Activated naive CD4-positive, alpha-beta T cell treated with anti-CD3 and anti-CD28 coated beads for 36 hours (primary cell): ENCODE measurements at regions of chr7 and their contacts with region 1.

Region 1: DNA sequence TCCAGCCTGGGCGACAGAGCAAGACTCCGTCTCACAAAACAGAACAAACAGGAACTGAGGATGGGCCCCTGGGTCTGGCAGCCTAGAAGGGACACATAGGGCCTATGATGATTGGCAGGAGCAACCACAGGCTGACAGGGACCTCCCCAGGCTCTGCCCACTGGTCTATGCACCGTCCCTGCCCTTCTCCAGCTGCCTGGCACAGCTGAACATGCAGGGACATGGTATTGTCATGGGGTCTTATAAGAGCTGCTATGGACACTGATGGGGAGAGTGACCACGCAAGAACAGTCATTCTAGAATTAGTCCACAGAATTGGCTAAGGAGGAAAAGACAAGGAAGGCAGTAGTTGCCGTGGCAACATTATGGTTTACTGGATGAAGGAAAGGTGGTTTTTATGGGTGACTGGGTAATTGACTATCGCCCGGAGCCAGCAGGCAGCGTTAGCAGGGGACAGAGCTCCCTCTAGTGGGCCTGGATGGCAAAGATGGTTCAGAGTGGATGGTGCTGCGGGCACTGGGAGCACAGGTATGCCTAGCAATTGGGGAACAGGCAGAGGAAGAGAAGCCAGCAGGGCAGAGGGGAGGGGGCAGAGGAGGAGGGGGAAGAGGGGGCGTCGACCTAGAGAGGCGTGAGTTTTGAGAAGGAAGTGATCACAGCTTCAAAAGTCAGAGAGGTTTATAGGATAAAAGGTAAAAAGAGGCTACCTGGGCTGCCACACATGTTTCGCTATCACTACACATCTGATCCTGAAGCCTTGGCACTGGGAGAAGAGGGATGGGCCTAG is 7.8 kb upstream of the TRIM56 start:
- DNase-seq: peak; percentile 94
- H3K4me3 Mint-ChIP-seq: no peak overlapping the region
- H3K27ac Mint-ChIP-seq: no peak overlapping the region
- H3K4me1 Mint-ChIP-seq: peaks cover 7% of the 10 kb centered on the region
- H3K27me3 Mint-ChIP-seq: no peaks in the 10 kb centered on the region

Region 2: DNA sequence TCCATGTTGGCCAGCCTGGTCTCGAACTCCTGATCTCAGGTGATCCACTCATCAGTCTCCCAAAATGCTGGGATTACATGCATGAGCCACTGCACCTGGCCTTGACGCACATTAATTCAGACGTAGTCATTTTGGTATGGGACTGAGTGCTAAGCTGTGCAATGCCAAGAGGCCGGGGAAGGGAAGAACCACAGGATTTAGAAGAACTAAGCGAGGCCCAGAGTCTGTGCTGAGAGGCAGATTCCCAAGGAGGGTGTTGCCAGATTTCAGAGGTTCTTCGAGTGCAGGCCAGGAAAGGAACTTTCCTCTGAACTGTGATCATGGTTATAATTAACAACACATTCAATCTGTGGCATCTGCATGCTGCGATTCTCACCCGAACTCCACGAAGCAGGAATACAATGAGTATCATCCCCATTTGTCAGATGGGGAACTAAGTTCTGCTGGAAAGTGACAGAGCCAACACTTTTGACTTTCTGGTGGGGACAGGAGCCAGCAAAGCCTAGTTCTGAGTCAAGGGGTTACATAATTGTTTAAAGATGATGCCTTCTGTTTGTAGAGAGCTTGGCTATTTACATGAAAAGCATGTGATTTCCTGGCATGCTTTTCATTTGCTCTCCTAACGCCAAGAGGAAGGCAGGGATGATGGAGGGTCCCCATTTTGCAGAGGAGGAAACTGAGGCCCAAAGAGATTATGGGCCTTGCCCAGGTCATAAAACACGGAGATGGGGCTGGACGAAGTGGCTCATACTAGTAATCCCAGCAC is 350.3 kb before region 1 on chr7:
- CTCF ChIA-PET with region 1: no interaction called
- intact Hi-C with region 1: no loop called
- DNase-seq: no peak
- H3K4me3 Mint-ChIP-seq: no peak overlapping the region
- H3K27ac Mint-ChIP-seq: no peak overlapping the region
- H3K4me1 Mint-ChIP-seq: peaks cover 3% of the 10 kb centered on the region
- H3K27me3 Mint-ChIP-seq: peaks cover 14% of the 10 kb centered on the region

Region 3: DNA sequence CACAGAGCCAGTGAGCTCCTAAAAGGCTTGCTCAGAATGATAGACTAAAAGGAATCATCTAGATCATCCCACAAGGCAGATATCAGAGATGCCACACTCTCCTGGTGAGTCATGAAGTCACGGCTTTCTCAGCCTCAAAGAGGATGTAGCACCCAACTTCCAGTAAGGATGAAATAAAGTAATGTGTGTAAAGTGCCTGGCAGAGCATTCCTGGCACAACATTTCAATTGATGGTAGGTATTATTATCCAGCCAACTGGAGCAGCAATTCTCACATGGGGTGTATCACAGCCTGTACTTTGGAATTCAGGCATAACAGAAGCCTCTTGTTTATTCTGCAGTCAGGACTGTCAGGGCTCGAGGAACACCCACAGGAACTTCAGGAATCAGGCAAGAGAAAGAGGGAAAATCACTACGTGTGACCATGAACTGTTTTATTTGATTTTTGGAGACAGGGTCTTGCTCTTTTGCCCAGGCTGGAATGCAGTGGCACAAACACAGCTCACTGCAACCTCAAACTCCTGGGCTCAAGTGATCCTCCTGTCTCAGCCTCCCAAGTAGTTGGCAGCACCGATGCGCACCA is 107.9 kb after region 1 on chr7:
- CTCF ChIA-PET with region 1: no interaction called
- intact Hi-C with region 1: loop called (anchors 5 kb)
- DNase-seq: no peak
- H3K4me3 Mint-ChIP-seq: no peak overlapping the region
- H3K27ac Mint-ChIP-seq: no peak overlapping the region
- H3K4me1 Mint-ChIP-seq: peaks cover 4% of the 10 kb centered on the region
- H3K27me3 Mint-ChIP-seq: peaks cover 24% of the 10 kb centered on the region

Region 4: DNA sequence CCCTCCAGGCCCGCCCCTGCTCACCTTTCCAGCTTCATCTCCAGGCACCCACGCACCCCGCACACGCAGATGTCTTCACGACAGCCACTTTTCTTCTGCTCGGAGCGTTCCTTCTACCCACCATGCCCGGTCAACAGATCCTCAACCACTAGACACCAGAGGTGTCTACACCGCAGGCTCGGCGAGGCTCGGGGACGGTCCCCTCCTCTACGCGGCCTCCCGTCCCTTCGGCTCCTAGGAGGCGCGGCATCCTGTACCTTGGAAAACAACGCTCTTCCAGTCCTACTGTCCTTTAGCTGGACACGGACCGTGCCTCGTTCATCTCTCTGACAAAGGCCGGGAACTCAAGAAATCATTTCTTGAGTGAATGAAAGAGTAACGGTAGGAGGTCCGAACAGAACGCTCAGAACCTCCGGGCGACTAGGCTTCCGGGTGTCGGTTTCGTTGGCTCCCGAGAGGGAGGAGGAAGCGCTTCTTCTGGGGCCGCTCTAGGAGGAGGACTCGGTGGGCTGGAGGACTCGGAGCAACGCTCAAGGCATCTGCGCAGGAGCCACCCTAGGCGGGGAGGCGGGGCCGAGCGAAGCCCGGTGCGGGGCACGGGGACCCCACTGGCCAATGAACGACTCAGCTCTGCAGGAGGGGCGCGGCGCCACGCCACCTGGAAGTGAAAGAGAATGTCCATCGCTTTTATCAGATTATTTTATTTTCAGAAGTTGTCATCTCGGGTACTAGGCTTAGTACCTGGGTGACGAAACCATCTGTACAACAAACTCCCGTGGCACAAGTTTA is 174.6 kb after region 1 on chr7:
- CTCF ChIA-PET with region 1: no interaction called
- intact Hi-C with region 1: no loop called
- DNase-seq: peak; percentile 99
- H3K4me3 Mint-ChIP-seq: peak overlapping the region; percentile 97
- H3K27ac Mint-ChIP-seq: peak overlapping the region; percentile 96
- H3K4me1 Mint-ChIP-seq: peaks cover 30% of the 10 kb centered on the region
- H3K27me3 Mint-ChIP-seq: no peaks in the 10 kb centered on the region

Region 5: GRCh38 chr7:101373812-101374614 is 296.5 kb after region 1 on chr7:
- CTCF ChIA-PET with region 1: no interaction called
- intact Hi-C with region 1: no loop called
- DNase-seq: no peak
- H3K4me3 Mint-ChIP-seq: no peak overlapping the region
- H3K27ac Mint-ChIP-seq: no peak overlapping the region
- H3K4me1 Mint-ChIP-seq: peaks cover 6% of the 10 kb centered on the region
- H3K27me3 Mint-ChIP-seq: no peaks in the 10 kb centered on the region